ENCODE measurements at regions of chr20 and their contacts with region 1.

Region 1: GRCh38 chr20:50172347-50173013 is 18.1 kb upstream of the CEBPB start:
- DNase-seq: peak; percentile 94
- ATAC-seq: peak; percentile 96
- H3K4me3 ChIP-seq: peak overlapping the region; percentile 64
- H3K27ac ChIP-seq: peak overlapping the region; percentile 88
- H3K4me1 ChIP-seq: peaks cover 14% of the 10 kb centered on the region
- H3K27me3 ChIP-seq: no peaks in the 10 kb centered on the region
- CTCF ChIP-seq: no peak

Region 2: GRCh38 chr20:50120897-50121693 is 51.4 kb before region 1 on chr20:
- intact Hi-C with region 1: loop called (anchors 5 kb)
- DNase-seq: peak; percentile 81
- ATAC-seq: peak; percentile 90
- H3K4me3 ChIP-seq: no peak overlapping the region
- H3K27ac ChIP-seq: no peak overlapping the region
- H3K4me1 ChIP-seq: peaks cover 16% of the 10 kb centered on the region
- H3K27me3 ChIP-seq: no peaks in the 10 kb centered on the region
- CTCF ChIP-seq: peak; percentile 85

Region 3: GRCh38 chr20:50296836-50297375 is 124.4 kb after region 1 on chr20:
- intact Hi-C with region 1: no loop called
- DNase-seq: no peak
- ATAC-seq: peak; percentile 5
- H3K4me3 ChIP-seq: no peak overlapping the region
- H3K27ac ChIP-seq: peak overlapping the region; percentile 68
- H3K4me1 ChIP-seq: peaks cover 27% of the 10 kb centered on the region
- H3K27me3 ChIP-seq: no peaks in the 10 kb centered on the region
- CTCF ChIP-seq: no peak

Measured in upper lobe of right lung (tissue), 1 donor.